ENCODE measurements at regions of chr7 and their contacts with region 1.

Region 1: GRCh38 chr7:22438994-22439393 is 61.0 kb downstream of the STEAP1B start:
- DNase-seq: peak; percentile 96
- H3K4me3 ChIP-seq: peak overlapping the region; percentile 39
- H3K27ac ChIP-seq: peak overlapping the region; percentile 99
- H3K4me1 ChIP-seq: peaks cover 98% of the 10 kb centered on the region
- CTCF ChIP-seq: no peak

Region 2: GRCh38 chr7:22350466-22351328 is 88.3 kb before region 1 on chr7:
- CTCF ChIA-PET with region 1: interaction called, 4 read pairs
- POLR2A ChIA-PET with region 1: interaction called, 26 read pairs
- intact Hi-C with region 1: no loop called
- DNase-seq: peak; percentile 31
- H3K4me3 ChIP-seq: peak overlapping the region; percentile 53
- H3K27ac ChIP-seq: peak overlapping the region; percentile 82
- H3K4me1 ChIP-seq: peaks cover 86% of the 10 kb centered on the region
- CTCF ChIP-seq: no peak

Region 3: DNA sequence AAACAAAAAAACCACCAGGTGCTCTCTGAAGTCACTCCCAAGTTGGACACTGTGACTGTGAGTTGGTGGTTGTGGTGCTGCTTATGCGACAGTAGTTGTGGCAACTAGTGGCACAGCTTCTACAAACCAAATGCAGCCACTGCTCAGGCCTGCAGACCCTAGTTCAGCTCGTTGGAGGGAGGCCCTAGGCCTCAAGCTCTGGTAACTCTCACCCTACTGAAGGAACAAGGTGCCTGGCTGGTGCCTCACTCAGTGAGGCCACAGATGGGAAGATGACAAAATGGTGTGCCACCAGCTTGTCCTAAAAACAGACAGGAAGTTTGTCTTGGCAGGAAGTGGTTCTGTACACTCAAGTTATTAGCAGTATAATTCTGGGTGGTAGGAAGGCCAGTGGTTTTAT is 36.7 kb before region 1 on chr7:
- CTCF ChIA-PET with region 1: interaction called, 5 read pairs
- POLR2A ChIA-PET with region 1: interaction called, 28 read pairs
- intact Hi-C with region 1: no loop called
- DNase-seq: peak; percentile 72
- H3K4me3 ChIP-seq: peak overlapping the region; percentile 24
- H3K27ac ChIP-seq: peak overlapping the region; percentile 75
- H3K4me1 ChIP-seq: peaks cover 33% of the 10 kb centered on the region
- CTCF ChIP-seq: no peak

Region 4: DNA sequence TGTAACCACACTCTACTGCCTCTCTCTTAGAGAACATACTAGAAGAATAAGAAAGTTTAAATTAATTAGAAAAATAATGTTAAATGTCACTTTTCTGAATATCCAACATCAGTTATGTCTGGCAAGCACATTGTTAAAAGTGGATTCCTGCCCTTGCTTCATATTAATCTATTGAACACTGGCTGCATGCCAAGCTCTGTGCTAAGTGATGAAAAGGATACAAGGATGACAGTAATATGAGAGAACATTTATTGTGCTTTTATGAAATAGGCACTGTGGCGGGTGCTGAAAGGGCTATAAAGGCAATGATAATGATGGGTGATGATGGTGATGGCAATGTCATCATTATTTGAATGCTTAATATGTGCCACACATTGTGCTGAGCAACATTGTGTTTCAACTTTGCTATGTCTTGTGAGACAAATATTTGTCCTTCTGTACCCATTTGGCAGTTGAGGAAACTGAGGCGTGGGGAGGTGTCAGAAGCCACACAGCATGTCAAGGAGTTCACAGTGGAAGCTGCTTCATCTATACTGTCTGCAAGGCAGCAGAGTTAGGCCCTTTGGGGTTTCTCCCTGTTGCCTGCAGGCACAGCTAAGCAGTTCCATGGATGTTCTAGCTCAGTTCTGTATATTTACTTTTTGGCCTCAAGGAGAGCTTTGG is 17.9 kb before region 1 on chr7:
- CTCF ChIA-PET with region 1: interaction called, 3 read pairs
- POLR2A ChIA-PET with region 1: interaction called, 156 read pairs
- intact Hi-C with region 1: loop called (anchors 1 kb)
- DNase-seq: no peak
- H3K4me3 ChIP-seq: no peak overlapping the region
- H3K27ac ChIP-seq: peak overlapping the region; percentile 87
- H3K4me1 ChIP-seq: peaks cover 68% of the 10 kb centered on the region
- CTCF ChIP-seq: no peak

Measured in OCI-LY7 (cell line).